GM13976 (cell line): ENCODE measurements at regions of chr22 and their contacts with region 1.

Region 1: GRCh38 chr22:39532215-39533071 is at the start of gene RPS19BP1:
- DNase-seq: peak; percentile 96
- CTCF ChIP-seq: no peak

Region 2: DNA sequence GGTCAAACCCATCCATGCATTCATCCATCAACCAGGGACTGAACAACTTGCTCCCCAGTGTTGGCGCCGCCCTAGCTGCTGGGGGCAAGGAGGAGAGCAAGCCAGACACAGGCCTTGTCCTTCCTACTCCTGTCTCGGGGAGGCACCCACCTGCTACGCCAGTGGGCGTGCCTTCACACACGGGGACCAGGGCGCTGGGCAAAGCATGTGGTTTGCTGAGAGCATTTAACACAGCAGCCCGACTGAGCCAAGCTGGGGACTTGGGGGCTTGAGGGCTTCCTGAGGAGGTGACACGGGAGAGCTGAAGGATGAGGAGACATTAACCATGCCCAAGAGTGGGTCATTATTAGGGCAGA is 68.7 kb after region 1 on chr22:
- in situ Hi-C with region 1: loop called (anchors 10 kb)
- DNase-seq: no peak
- CTCF ChIP-seq: no peak

Region 3: DNA sequence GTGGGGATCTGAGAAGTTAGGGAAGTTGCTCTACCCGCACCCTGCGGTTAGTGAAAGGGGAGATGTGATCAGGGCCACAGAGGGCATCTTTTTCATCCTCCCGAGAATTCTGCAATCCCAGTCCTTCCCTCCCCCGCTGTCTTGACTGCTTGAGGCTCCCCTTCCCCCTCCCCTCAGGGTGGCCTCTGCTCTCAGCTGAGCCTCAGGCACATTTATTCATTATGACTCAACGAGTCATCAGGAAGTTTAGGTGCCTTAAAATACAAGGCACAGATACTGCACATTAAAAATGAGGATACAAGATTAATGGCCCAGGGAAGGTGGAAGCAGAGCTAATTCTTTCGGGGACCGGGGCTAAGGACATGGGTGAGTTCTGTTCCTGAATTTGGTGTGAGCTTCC is 142.1 kb after region 1 on chr22:
- in situ Hi-C with region 1: no loop called
- DNase-seq: no peak
- CTCF ChIP-seq: no peak

Region 4: DNA sequence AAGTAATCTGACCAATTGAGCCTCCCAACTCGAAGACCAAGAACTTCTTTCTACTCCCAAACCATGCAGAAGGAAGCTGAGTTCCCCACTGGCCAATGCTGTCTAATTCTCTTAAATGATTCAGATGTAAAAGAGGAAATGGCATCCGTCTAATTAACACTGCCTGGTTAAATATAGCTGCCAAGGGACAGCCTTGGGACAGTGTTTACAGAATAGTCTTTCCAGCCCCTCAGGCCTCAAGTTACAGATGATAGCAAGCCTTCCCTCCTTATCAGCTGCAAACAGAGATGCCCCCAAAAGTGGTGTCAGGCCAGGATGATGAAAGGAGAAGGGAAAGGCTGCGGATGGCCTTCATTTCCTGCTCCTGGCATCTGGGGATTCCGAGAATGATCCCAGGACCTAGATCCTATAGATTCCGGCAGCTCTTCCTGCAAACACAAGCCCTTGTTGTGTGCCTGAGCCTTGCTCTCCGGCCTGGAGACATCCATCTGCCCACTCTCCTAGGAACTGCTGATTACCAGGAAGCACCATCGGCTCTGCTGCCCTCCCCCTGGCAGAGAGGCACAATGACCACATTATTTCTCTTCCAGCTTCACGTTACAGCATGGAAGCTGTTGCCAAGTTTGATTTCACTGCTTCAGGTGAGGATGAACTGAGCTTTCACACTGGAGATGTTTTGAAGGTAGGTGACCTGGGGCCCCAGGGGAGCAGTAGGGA is 414.2 kb after region 1 on chr22:
- in situ Hi-C with region 1: loop called (anchors 10 kb)
- DNase-seq: no peak
- CTCF ChIP-seq: no peak

Region 5: GRCh38 chr22:40036591-40037225 is 504.3 kb after region 1 on chr22:
- in situ Hi-C with region 1: loop called (anchors 5 kb)
- DNase-seq: peak; percentile 78
- CTCF ChIP-seq: peak; percentile 74

Region 6: GRCh38 chr22:40177738-40178416 is 645.4 kb after region 1 on chr22 and contains the start of gene TNRC6B:
- in situ Hi-C with region 1: loop called (anchors 25 kb)
- DNase-seq: peak; percentile 78
- CTCF ChIP-seq: no peak

Region 7: GRCh38 chr22:40363059-40363458 is 830.6 kb after region 1 on chr22:
- in situ Hi-C with region 1: loop called (anchors 25 kb)
- DNase-seq: no peak
- CTCF ChIP-seq: no peak